Colonic mucosa (tissue), 4 donors: ENCODE measurements at regions of chr1 and their contacts with region 1.

Region 1: GRCh38 chr1:162036163-162036562 is 12.5 kb upstream of the OLFML2B start:
- DNase-seq: no peak
- H3K4me3 ChIP-seq: no peak overlapping the region
- H3K27ac ChIP-seq: no peak overlapping the region
- H3K4me1 ChIP-seq: no peaks in the 10 kb centered on the region
- H3K27me3 ChIP-seq: no peaks in the 10 kb centered on the region
- CTCF ChIP-seq: no peak

Region 2: DNA sequence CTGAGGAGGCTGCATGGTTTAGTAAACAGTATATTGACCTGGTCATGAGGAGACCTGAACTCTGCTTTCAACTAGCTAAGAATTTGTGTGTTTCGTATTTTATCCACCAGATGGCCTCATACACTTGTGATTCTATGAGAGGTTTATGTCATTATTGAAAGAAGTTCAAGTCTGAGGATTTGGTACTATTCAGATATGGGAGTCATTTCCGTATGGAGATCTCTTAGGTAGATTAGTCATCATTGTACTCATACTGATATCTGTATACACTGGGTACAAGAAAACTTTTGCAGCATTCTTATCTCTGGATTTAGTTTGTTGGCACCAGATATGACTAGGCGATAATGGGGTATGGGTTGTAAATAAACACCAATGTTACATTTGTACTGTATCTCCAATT is 243.4 kb before region 1 on chr1:
- intact Hi-C with region 1: loop called (anchors 2 kb)
- DNase-seq: no peak
- H3K4me3 ChIP-seq: no peak overlapping the region
- H3K27ac ChIP-seq: no peak overlapping the region
- H3K4me1 ChIP-seq: no peaks in the 10 kb centered on the region
- H3K27me3 ChIP-seq: no peaks in the 10 kb centered on the region
- CTCF ChIP-seq: peak; percentile 39

Region 3: GRCh38 chr1:162168249-162168648 is 132.1 kb after region 1 on chr1:
- intact Hi-C with region 1: no loop called
- DNase-seq: peak; percentile 29
- H3K4me3 ChIP-seq: no peak overlapping the region
- H3K27ac ChIP-seq: no peak overlapping the region
- H3K4me1 ChIP-seq: no peaks in the 10 kb centered on the region
- H3K27me3 ChIP-seq: no peaks in the 10 kb centered on the region
- CTCF ChIP-seq: no peak